Adrenal gland (tissue), 19 donors: ENCODE measurements at regions of chr11 and their contacts with region 1.

Region 1: GRCh38 chr11:34594603-34595002 is 26.3 kb upstream of the EHF start:
- DNase-seq: no peak
- H3K4me3 ChIP-seq: no peak overlapping the region
- H3K27ac ChIP-seq: no peak overlapping the region
- H3K4me1 ChIP-seq: no peaks in the 10 kb centered on the region
- H3K27me3 ChIP-seq: no peaks in the 10 kb centered on the region
- CTCF ChIP-seq: no peak
- POLR2A ChIP-seq: no peak

Region 2: GRCh38 chr11:34091825-34092224 is 502.8 kb before region 1 on chr11:
- intact Hi-C with region 1: no loop called
- DNase-seq: no peak
- H3K4me3 ChIP-seq: no peak overlapping the region
- H3K27ac ChIP-seq: no peak overlapping the region
- H3K4me1 ChIP-seq: no peaks in the 10 kb centered on the region
- H3K27me3 ChIP-seq: no peaks in the 10 kb centered on the region
- CTCF ChIP-seq: no peak
- POLR2A ChIP-seq: no peak

Region 3: DNA sequence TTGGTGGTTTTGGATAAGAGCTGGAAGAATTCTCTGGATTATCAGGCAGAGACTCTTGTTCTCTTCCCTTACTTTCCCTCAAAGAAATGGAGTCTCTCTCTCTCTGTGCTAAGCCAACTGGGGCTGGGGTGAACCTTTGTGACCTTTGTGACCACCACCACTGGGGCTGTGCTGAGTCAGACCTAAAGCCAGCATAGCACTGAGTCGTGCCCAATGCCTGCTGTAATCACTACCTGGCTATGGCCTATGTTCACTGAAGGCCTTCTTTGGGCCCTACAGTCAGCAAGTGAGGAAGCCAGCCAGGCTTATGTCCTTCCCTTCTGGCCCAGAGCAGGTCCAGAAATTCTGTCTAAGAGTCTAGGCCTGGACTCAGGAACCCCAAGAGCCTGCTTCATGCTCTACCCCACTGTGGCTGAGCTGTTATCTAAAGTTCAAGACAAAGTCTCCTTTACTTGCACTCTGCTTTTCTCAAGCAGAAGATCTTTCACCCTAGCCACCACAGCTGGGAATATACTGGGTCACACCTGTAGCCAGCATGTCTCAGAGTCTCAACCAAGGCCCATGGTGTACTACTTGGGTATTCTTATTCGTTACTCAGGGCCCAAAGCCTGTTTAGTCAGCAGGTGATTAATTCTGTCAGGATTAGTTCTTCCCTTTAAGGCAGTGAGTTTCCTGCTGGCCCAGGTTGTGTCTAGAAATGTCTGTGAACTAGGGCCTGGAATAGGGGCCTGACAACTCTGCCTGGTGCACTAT is 112.3 kb after region 1 on chr11:
- intact Hi-C with region 1: no loop called
- DNase-seq: no peak
- H3K4me3 ChIP-seq: no peak overlapping the region
- H3K27ac ChIP-seq: no peak overlapping the region
- H3K4me1 ChIP-seq: no peaks in the 10 kb centered on the region
- H3K27me3 ChIP-seq: no peaks in the 10 kb centered on the region
- CTCF ChIP-seq: no peak
- POLR2A ChIP-seq: no peak

Region 4: GRCh38 chr11:34890812-34891211 is 296.2 kb after region 1 on chr11:
- intact Hi-C with region 1: loop called in 1 of 2 experiments (anchors 5 kb)
- DNase-seq: no peak
- H3K4me3 ChIP-seq: no peak overlapping the region
- H3K27ac ChIP-seq: no peak overlapping the region
- H3K4me1 ChIP-seq: no peaks in the 10 kb centered on the region
- H3K27me3 ChIP-seq: no peaks in the 10 kb centered on the region
- CTCF ChIP-seq: peak; percentile 29 to 72 (median 59)
- POLR2A ChIP-seq: no peak